CD8-positive, alpha-beta T cell (primary cell): ENCODE measurements at regions of chr19 and their contacts with region 1.

Region 1: GRCh38 chr19:1863726-1864480 is 524 bp upstream of the KLF16 start:
- DNase-seq: peak; percentile 80 to 96 (median 94)
- ATAC-seq: peak; percentile 71
- H3K4me3 ChIP-seq: peak overlapping the region; percentile 84 to 96
- H3K4me3 Mint-ChIP-seq: peak overlapping the region; percentile 80
- H3K27ac ChIP-seq: peak overlapping the region; percentile 71 to 83
- H3K27ac Mint-ChIP-seq: peak overlapping the region; percentile 57
- H3K4me1 ChIP-seq: peaks cover 42% of the 10 kb centered on the region
- H3K4me1 Mint-ChIP-seq: peaks cover 34% of the 10 kb centered on the region
- H3K27me3 ChIP-seq: no peaks in the 10 kb centered on the region
- H3K27me3 Mint-ChIP-seq: no peaks in the 10 kb centered on the region
- CTCF ChIP-seq: no peak

Region 2: GRCh38 chr19:1406774-1407499 is 457.0 kb before region 1 on chr19:
- CTCF ChIA-PET with region 1: no interaction called
- POLR2A ChIA-PET with region 1: no interaction called
- intact Hi-C with region 1: loop called in 1 of 2 experiments (anchors 1 kb)
- DNase-seq: peak; percentile 99 to 100 (median 99)
- ATAC-seq: peak; percentile 80
- H3K4me3 ChIP-seq: peak overlapping the region; percentile 52 to 59
- H3K4me3 Mint-ChIP-seq: peak overlapping the region; percentile 79
- H3K27ac ChIP-seq: peak overlapping the region; percentile 56 to 80
- H3K27ac Mint-ChIP-seq: peak overlapping the region; percentile 89
- H3K4me1 ChIP-seq: peaks cover 48% of the 10 kb centered on the region
- H3K4me1 Mint-ChIP-seq: peaks cover 41% of the 10 kb centered on the region
- H3K27me3 ChIP-seq: no peaks in the 10 kb centered on the region
- H3K27me3 Mint-ChIP-seq: no peaks in the 10 kb centered on the region
- CTCF ChIP-seq: peak; percentile 70

Region 3: DNA sequence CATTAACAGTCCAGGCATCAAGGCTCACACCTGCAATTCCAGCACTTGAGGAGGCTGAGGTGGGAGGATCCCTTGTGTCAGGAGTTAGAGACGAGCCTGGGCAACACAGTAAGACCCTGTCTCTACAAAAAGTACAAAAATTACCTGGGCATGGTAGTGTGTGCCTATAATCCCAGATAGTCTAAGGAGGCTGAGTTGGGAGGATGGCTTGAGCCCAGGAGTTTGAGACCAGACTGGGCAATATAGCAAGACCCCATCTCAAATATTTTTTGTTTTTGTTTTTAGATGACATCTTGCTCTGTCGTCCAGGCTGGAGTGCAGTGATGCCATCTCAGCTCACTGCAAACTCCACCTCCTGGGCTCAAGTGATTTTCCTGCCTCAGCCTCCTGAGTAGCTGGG is 150.7 kb before region 1 on chr19:
- CTCF ChIA-PET with region 1: no interaction called
- POLR2A ChIA-PET with region 1: no interaction called
- intact Hi-C with region 1: no loop called
- DNase-seq: no peak
- ATAC-seq: no peak
- H3K4me3 ChIP-seq: no peak overlapping the region
- H3K4me3 Mint-ChIP-seq: no peak overlapping the region
- H3K27ac ChIP-seq: no peak overlapping the region
- H3K27ac Mint-ChIP-seq: no peak overlapping the region
- H3K4me1 ChIP-seq: no peaks in the 10 kb centered on the region
- H3K4me1 Mint-ChIP-seq: no peaks in the 10 kb centered on the region
- H3K27me3 ChIP-seq: peaks cover 0 to 9% of the 10 kb centered on the region in 2 experiments
- H3K27me3 Mint-ChIP-seq: peaks cover 40% of the 10 kb centered on the region
- CTCF ChIP-seq: no peak

Region 4: DNA sequence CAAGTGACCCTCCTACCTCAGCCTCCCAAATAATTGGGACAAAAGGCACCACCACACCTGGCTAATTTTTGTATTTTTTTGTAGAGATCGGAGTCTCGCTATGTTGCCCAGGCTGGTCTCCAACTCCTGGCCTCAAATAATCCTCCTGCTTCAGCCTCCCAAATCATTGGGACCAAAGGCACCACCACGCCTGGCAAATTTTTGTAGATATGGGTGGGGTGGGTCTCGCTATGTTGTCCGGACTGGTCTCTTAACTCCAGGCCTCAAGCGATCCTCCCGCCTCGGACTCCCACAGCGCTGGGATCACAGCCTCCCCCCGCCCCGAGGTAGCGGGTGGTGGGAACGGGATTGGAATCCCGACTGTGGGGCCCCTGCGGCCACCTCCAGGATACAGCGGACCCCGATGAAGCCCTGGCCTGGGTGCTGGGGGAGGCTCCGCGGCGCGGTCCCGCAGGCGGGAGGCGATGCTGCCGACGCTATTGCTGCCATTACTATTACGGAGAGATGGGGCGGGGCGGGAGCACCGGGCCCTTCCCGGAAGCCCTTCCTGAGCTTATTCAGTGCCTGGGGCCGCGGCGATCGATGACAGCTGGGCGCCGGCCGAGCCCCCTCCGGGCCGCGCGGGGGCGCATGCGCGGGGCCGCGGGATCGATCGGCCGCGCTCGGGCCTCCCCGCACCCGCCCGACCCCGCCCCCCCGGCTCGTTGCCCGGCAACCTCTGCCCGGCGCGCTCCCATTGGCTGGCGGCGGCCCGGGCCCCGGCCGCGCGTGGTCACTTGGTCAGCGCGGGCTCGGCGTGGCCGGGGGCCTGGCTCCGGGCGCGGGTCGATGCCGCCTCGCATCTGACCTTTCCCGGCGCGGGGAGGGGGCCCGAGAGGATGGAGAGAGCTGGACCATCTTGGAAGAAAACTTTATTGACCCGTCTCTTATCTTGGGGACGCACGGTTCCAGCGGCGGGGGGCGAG is 138.5 kb before region 1 on chr19:
- CTCF ChIA-PET with region 1: no interaction called
- POLR2A ChIA-PET with region 1: no interaction called
- intact Hi-C with region 1: no loop called
- DNase-seq: peak in 3 of 9 experiments; percentile 9 to 54 (median 48)
- ATAC-seq: no peak
- H3K4me3 ChIP-seq: peak overlapping the region; percentile 18 to 37
- H3K4me3 Mint-ChIP-seq: peak overlapping the region; percentile 54
- H3K27ac ChIP-seq: no peak overlapping the region
- H3K27ac Mint-ChIP-seq: no peak overlapping the region
- H3K4me1 ChIP-seq: peaks cover 7% of the 10 kb centered on the region
- H3K4me1 Mint-ChIP-seq: peaks cover 4% of the 10 kb centered on the region
- H3K27me3 ChIP-seq: peaks cover 19 to 32% of the 10 kb centered on the region in 2 experiments
- H3K27me3 Mint-ChIP-seq: peaks cover 52% of the 10 kb centered on the region
- CTCF ChIP-seq: no peak

Region 5: GRCh38 chr19:1848399-1849131 is 15.3 kb before region 1 on chr19 and contains the start of gene REXO1:
- CTCF ChIA-PET with region 1: no interaction called
- POLR2A ChIA-PET with region 1: no interaction called
- intact Hi-C with region 1: loop called (anchors 1 kb)
- DNase-seq: peak; percentile 96 to 99 (median 97)
- ATAC-seq: peak; percentile 76
- H3K4me3 ChIP-seq: peak within 1 kb of the TSS; percentile 86 to 90
- H3K4me3 Mint-ChIP-seq: peak within 1 kb of the TSS; percentile 88
- H3K27ac ChIP-seq: peak within 1 kb of the TSS; percentile 93 to 97
- H3K27ac Mint-ChIP-seq: peak within 1 kb of the TSS; percentile 93
- H3K4me1 ChIP-seq: peaks cover 72% of the 10 kb centered on the region
- H3K4me1 Mint-ChIP-seq: peaks cover 56% of the 10 kb centered on the region
- H3K27me3 ChIP-seq: no peaks in the 10 kb centered on the region
- H3K27me3 Mint-ChIP-seq: no peaks in the 10 kb centered on the region
- CTCF ChIP-seq: peak; percentile 91
- total RNA-seq, gene REXO1: 143 to 152 TPM

Region 6: DNA sequence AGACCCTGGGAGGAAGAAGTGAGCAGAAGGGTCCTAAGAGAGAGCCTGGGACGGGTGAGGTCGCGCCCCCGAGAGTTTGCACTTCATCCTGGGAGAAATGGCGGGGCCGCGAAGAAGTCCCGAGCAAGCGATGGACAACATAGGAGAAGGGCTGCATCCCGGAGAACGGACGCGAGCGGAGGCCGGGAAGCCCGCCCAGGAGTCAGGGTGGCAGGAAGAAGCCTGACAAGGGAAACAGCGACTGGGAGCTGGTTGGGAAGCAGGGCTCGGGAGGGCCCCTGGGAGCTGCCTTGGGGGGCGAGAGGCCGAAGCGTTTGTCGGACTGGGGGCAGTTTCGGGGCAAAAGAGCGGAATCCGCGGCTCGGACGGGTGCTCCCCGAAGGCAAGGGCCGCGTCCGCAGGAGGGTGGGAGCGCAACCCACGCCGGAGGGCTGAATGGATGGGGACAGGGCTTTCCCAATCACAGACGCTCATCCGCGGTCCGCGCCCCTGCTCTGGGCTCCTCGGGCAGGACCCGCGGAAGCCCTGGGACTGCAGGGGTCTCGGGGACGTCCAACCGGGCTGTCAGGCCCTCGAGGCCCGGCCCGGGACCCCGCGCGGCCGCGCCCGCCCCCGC is 20.9 kb after region 1 on chr19:
- CTCF ChIA-PET with region 1: no interaction called
- POLR2A ChIA-PET with region 1: no interaction called
- intact Hi-C with region 1: loop called (anchors 1 kb)
- DNase-seq: peak in 3 of 9 experiments; percentile 41 to 51 (median 48)
- ATAC-seq: no peak
- H3K4me3 ChIP-seq: peak overlapping the region; percentile 77 to 100
- H3K4me3 Mint-ChIP-seq: peak overlapping the region; percentile 100
- H3K27ac ChIP-seq: peak overlapping the region; percentile 92
- H3K27ac Mint-ChIP-seq: peak overlapping the region; percentile 99
- H3K4me1 ChIP-seq: peaks cover 40% of the 10 kb centered on the region
- H3K4me1 Mint-ChIP-seq: peaks cover 38% of the 10 kb centered on the region
- H3K27me3 ChIP-seq: no peaks in the 10 kb centered on the region
- H3K27me3 Mint-ChIP-seq: no peaks in the 10 kb centered on the region
- CTCF ChIP-seq: no peak

Region 7: GRCh38 chr19:2041683-2042484 is 178.0 kb after region 1 on chr19:
- CTCF ChIA-PET with region 1: no interaction called
- POLR2A ChIA-PET with region 1: no interaction called
- intact Hi-C with region 1: loop called in 1 of 2 experiments (anchors 1 kb)
- DNase-seq: peak; percentile 99 to 100 (median 100)
- ATAC-seq: peak; percentile 85
- H3K4me3 ChIP-seq: peak overlapping the region; percentile 28 to 62
- H3K4me3 Mint-ChIP-seq: peak overlapping the region; percentile 65
- H3K27ac ChIP-seq: peak overlapping the region; percentile 96 to 100
- H3K27ac Mint-ChIP-seq: peak overlapping the region; percentile 93
- H3K4me1 ChIP-seq: peaks cover 54% of the 10 kb centered on the region
- H3K4me1 Mint-ChIP-seq: peaks cover 28% of the 10 kb centered on the region
- H3K27me3 ChIP-seq: no peaks in the 10 kb centered on the region
- H3K27me3 Mint-ChIP-seq: no peaks in the 10 kb centered on the region
- CTCF ChIP-seq: no peak

Region 8: DNA sequence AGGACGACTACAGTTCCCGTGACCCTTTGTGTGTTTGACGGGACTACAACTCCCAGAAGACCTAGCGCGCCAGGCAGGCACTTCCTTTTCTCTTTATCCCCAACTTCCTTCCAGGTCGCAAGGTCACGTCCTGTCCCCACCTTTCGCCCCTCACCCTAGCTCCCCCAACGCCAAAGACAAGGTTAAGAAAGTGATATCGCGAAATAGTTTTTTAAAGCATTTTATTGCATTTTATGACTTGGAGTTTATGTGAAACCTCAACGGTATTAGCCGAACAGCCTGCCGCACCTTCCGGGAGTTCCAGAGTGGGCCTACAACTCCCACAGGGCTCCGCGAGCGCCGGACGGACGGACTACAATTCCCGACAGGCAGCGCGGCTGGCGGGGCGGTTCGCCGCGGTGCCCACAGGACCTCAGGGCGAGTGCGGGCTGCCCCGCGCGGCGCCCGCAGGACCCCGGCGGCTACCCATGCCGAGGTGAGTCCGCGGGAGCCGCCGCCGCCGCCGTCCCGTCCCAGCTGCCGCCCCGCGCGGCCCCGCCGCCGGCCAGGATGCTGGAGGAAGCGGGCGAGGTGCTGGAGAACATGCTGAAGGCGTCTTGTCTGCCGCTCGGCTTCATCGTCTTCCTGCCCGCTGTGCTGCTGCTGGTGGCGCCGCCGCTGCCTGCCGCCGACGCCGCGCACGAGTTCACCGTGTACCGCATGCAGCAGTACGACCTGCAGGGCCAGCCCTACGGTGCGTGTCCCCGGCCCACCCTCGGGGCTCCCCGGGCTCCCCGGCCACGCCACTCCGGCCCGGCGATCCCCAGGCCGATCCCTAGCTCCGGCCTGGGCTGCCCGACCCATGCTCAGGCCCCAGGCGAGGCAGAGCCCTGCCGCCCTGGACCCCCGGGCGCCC is 1321.8 kb after region 1 on chr19 and contains the start of gene NCLN:
- CTCF ChIA-PET with region 1: no interaction called
- POLR2A ChIA-PET with region 1: no interaction called
- intact Hi-C with region 1: loop called in 1 of 2 experiments (anchors 5 kb)
- DNase-seq: peak; percentile 91 to 98 (median 94)
- ATAC-seq: peak; percentile 84
- H3K4me3 ChIP-seq: peak within 1 kb of the TSS; percentile 66 to 76
- H3K4me3 Mint-ChIP-seq: peak within 1 kb of the TSS; percentile 92
- H3K27ac ChIP-seq: peak within 1 kb of the TSS; percentile 34 to 84
- H3K27ac Mint-ChIP-seq: peak within 1 kb of the TSS; percentile 89
- H3K4me1 ChIP-seq: peaks cover 67% of the 10 kb centered on the region
- H3K4me1 Mint-ChIP-seq: peaks cover 61% of the 10 kb centered on the region
- H3K27me3 ChIP-seq: no peaks in the 10 kb centered on the region
- H3K27me3 Mint-ChIP-seq: no peaks in the 10 kb centered on the region
- CTCF ChIP-seq: no peak
- total RNA-seq, gene NCLN: 47.3 to 55.7 TPM